ENCODE measurements at regions of chr6 and their contacts with region 1.

Region 1: GRCh38 chr6:2911171-2911570 is 8.1 kb upstream of the SERPINB9 start:
- H3K4me3 ChIP-seq: no peak overlapping the region
- H3K27ac ChIP-seq: no peak overlapping the region
- H3K4me1 ChIP-seq: no peaks in the 10 kb centered on the region
- CTCF ChIP-seq: no peak

Region 2: DNA sequence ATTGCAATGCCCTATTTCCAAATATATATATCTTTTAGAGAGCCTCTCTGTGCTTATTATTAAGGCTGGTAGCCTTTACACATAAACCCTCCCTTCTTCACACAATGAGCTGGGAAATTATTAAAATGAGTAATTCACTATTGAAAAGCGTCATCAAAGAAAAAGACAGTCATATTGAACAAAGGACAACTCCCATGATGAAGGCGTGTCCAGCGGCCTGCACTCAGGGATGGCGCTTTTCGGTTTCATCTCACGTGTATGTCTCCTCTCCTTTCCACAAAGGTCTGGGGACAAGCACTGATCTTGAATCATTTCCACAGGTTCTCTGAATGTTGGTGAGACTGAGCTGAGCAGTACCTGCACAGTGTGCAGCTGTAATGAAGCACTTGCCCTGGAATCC is 11.6 kb before region 1 on chr6:
- CTCF ChIA-PET with region 1: interaction called, 12 read pairs
- POLR2A ChIA-PET with region 1: no interaction called
- H3K4me3 ChIP-seq: no peak overlapping the region
- H3K27ac ChIP-seq: no peak overlapping the region
- H3K4me1 ChIP-seq: no peaks in the 10 kb centered on the region
- CTCF ChIP-seq: no peak

Region 3: DNA sequence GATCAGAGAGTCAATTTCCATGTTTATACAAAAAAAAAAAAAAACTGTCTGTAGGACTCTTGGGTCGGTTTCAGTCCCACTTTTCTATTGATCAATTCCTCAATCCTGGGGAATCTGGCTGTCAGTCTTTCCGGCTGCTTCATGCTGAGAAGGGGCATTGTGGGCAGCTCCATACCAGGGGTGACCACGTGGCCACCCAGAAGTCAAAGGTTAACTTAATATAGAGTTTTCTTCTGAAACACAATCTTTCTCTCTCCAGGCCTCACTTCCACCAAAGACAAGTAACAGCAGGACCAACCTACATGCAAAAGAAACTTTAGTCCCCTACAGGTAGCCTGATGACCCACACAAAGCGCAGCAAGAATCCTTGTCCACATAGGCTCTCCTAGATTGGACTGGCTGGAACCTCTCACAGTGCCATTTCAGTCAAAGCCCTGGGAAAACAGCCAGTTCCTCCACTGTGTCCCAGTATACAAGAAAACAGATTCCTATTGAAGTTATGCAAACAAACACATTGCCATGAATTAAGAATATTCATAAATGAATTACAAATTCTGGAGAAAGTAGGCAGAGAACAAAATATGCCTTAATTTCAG is 10.4 kb after region 1 on chr6:
- CTCF ChIA-PET with region 1: interaction called, 23 read pairs
- POLR2A ChIA-PET with region 1: no interaction called
- H3K4me3 ChIP-seq: no peak overlapping the region
- H3K27ac ChIP-seq: no peak overlapping the region
- H3K4me1 ChIP-seq: no peaks in the 10 kb centered on the region
- CTCF ChIP-seq: no peak

Region 4: DNA sequence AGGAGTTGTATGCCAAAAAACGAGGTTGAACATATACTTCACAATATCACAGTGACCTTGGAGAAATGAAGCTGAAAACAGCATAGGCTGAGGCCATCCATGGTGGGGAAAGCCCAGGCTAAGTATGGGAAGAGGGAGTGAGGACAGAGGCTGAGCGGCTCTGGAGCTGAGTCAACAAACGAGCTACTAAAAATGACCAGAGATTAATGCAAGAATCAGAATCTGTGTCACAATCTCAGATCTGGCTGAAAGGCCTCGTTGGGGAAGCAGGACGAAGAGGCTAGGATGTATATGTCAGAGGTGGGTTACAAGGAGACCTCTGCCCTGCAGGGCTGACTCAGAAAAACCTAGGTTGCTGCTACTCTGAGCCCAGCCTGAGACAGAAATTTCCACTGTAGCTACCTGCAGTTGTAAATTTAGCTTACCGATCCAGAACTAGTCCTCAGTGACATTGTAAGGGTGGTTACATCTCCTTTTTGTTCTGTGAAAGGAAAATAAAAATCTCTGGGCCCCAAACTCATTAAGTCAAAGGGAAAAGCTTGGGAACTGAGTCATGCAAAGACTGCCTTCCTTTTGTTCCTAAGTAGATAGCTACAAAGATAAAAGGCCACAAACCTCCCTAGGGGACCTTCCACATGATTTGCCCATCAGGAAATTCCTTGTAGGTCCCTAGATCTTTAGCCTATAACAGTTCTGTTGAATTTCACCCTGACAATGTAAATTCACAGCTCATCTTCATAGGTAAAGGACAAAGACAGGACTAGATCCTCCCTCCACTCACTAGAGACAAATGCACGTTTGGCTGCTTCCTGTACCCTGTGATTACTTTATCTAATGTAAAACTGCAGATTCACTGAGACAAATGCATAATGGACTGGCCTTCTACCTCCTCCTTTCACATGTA is 254.7 kb after region 1 on chr6:
- CTCF ChIA-PET with region 1: no interaction called
- POLR2A ChIA-PET with region 1: no interaction called
- H3K4me3 ChIP-seq: no peak overlapping the region
- H3K27ac ChIP-seq: no peak overlapping the region; the same call in 1 of the 2 replicates
- H3K4me1 ChIP-seq: peaks cover 18% of the 10 kb centered on the region
- CTCF ChIP-seq: no peak

Measured in HEK293 (cell line).